Posterior vena cava (tissue), 2 donors: ENCODE measurements at regions of chr4 and their contacts with region 1.

Region 1: DNA sequence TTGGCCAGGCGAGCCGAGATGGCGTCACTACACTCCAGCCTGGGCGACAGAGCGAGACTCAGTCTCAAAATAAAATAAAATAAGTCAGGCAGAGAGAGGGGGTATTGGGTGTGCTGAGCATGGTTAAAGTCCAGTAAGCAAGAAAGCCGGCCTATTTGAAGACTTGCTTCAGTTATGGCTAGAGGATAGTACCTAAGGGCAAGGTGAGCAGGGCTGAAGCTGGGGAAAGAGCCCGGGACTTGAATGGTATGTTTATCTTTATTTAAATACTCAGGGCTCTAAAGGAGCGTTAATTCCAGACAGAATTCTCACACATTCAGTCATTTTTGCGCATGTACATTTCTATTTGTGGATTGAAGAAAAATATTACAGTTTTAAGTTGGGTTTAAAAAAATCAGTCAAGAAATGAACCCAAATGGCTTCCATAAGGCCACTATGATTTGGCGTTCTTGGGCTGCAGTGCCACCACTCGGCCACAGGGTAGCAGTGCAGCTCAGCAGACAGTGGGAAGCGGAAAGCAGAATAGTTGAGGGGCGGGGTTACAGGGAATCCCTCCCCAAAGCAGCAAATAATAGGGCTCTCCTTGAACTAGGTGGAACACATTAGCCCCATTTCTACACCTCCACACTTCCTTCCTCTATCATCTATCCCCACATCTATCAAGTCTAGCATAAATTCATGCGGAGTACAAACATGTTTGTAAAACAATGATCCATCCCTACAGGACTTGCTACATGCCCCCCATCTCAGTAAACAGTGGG is 37.2 kb upstream of the SH3D19 start:
- DNase-seq: peak; percentile 90

Region 2: GRCh38 chr4:151117371-151117962 is 245.1 kb before region 1 on chr4:
- intact Hi-C with region 1: loop called (anchors 10 kb)
- DNase-seq: no peak

Region 3: DNA sequence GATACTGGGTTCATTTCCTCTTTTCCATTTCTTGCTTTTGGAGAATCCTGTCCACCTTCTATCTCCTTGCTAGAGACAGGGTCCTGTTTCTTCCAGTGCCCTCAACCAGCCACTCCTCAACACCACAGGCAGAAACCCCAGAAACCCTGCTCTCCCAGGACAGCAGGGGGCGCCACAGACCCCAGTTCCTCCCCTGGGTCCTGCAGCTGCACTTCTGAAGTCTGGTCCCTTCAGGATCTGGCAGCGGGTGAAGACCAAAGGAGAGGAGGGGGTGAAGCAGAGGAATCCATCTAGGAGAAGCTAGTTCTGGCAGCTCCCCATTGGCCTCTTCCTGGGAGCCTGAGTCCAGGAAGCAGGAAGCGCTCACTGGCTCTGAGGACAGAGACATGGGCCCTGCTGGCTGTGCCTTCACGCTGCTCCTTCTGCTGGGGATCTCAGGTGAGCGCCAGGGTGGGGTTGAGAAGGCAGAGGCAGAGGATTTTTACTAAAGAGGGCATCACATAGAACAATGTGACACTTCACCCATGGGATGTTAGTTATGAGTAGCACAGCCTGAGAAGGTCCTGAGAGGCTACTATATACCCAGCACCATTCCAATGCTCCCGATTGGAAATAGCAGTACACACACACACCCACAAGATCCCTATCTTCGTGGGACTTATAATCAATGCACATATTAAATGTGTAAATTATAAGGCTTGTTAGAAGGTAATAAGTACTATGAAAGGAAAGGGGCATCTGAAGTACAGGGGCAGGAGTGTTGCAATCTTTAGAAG is 85.6 kb before region 1 on chr4 and contains the start of gene PRSS48:
- intact Hi-C with region 1: loop called in 1 of 2 experiments (anchors 2 kb)
- DNase-seq: no peak
- total RNA-seq, gene PRSS48: not detected

Region 4: DNA sequence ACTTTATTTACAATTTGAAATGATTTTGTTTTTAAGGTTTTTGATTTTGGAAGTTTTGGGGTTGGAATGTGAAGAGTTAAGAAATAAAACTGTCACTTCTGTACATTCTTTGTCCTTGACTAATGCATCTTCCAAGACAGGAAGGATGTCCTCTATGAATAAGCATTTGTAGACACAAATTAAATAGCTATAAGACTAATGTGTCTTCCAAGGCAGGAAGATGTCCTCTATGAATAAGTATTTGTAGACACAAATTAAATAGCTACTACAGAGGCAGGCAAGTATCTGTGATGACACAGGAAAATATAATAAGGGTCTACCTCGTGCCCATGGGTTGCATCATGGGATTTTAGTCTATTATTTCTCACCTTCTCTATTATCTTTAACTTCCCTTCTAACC is 71.1 kb before region 1 on chr4:
- intact Hi-C with region 1: no loop called
- DNase-seq: no peak